ENCODE measurements at regions of chr5 and their contacts with region 1.

Region 1: GRCh38 chr5:179806250-179807222 is at the start of gene MGAT4B:
- DNase-seq: peak; percentile 69
- ATAC-seq: peak; percentile 79
- H3K4me3 Mint-ChIP-seq: peak within 1 kb of the TSS; percentile 79
- H3K27ac Mint-ChIP-seq: peak within 1 kb of the TSS; percentile 70
- H3K4me1 Mint-ChIP-seq: peaks cover 37% of the 10 kb centered on the region
- H3K27me3 Mint-ChIP-seq: no peaks in the 10 kb centered on the region
- CTCF ChIP-seq: no peak
- total RNA-seq, gene MGAT4B: 73.6 and 85.3 TPM in 2 replicates

Region 2: DNA sequence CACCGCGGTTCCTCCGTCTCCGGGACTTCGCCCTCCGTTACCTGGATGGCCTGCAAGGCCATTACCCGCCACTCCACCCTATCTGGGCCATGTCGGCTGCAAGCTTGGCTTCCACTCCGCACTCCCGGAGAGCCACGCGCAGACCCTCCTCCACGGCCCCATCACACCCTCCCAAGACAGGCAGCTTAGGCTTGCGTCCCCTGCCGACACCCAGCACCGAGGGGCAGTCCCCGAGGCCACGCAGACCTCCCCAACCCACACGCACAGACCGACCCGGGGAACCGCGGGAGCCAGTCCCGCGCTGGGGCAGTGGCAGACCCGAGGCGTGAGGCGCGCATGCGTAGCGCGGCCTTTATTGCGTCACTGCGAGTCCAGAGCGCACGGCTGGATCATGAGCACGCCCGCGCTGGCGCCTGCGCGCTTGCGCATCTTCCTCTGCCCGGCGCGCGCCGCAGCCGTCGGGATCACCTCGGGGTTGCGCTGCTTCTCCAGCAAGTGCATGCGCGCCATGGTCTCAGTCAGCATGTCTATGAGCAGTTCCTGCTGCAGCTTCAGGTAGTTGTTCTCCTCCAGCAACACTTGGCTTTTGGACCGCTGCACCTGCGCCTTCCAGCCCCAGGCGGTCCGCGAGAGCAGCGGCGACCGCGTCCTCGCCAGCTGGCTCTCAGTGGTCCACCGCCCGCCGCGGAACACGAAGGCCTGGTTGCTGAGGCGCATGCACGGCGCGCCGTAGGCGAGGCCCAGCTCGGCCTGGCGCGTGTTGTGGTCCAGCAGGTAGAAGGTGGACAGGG is 128.1 kb before region 1 on chr5:
- CTCF ChIA-PET with region 1: interaction called, 3 read pairs
- POLR2A ChIA-PET with region 1: interaction called, 10 read pairs
- intact Hi-C with region 1: no loop called
- DNase-seq: peak; percentile 91
- ATAC-seq: peak; percentile 91
- H3K4me3 Mint-ChIP-seq: peak overlapping the region; percentile 96
- H3K27ac Mint-ChIP-seq: peak overlapping the region; percentile 94
- H3K4me1 Mint-ChIP-seq: peaks cover 32% of the 10 kb centered on the region
- H3K27me3 Mint-ChIP-seq: no peaks in the 10 kb centered on the region
- CTCF ChIP-seq: no peak

Region 3: DNA sequence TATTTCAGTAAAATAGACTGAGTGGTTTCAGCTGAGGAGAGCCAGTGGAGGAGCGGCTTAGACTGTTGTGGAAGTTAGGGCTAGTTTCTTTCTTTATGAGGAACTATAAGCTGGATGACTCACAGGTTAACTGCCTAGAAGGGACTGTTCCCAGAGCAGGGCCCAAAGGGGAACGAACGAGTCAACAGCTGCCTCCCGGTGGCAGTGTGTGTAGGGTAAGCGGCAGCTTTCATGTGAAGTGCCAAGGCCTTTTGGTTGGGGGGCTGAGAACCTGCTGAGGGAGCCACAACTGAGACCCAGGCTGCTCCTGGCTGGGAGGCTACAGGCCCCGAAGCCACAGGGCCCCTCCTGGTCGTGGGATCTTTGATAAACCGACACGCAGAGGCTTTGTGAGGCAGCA is 21.1 kb after region 1 on chr5:
- CTCF ChIA-PET with region 1: interaction called, 12 read pairs
- POLR2A ChIA-PET with region 1: interaction called, 7 read pairs
- intact Hi-C with region 1: no loop called
- DNase-seq: no peak
- ATAC-seq: peak; percentile 82
- H3K4me3 Mint-ChIP-seq: no peak overlapping the region
- H3K27ac Mint-ChIP-seq: peak overlapping the region; percentile 56
- H3K4me1 Mint-ChIP-seq: peaks cover 35% of the 10 kb centered on the region
- H3K27me3 Mint-ChIP-seq: no peaks in the 10 kb centered on the region
- CTCF ChIP-seq: no peak

Region 4: DNA sequence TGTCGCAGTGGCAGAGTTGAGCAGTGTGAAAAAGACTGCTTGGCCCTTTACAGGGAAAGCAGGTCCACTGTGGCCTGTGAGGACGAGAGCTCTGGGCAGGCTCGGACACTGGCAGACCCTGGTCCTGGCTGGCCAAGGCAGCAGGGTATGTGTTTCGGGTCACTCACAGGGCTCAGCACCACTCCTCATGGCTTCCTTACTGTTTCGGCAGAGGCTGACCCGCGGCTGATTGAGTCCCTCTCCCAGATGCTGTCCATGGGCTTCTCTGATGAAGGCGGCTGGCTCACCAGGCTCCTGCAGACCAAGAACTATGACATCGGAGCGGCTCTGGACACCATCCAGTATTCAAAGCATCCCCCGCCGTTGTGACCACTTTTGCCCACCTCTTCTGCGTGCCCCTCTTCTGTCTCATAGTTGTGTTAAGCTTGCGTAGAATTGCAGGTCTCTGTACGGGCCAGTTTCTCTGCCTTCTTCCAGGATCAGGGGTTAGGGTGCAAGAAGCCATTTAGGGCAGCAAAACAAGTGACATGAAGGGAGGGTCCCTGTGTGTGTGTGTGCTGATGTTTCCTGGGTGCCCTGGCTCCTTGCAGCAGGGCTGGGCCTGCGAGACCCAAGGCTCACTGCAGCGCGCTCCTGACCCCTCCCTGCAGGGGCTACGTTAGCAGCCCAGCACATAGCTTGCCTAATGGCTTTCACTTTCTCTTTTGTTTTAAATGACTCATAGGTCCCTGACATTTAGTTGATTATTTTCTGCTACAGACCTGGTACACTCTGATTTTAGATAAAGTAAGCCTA is 29.9 kb after region 1 on chr5:
- CTCF ChIA-PET with region 1: interaction called, 3 read pairs
- POLR2A ChIA-PET with region 1: interaction called, 9 read pairs
- intact Hi-C with region 1: loop called (anchors 2 kb)
- DNase-seq: no peak
- ATAC-seq: peak; percentile 92
- H3K4me3 Mint-ChIP-seq: no peak overlapping the region
- H3K27ac Mint-ChIP-seq: peak overlapping the region; percentile 63
- H3K4me1 Mint-ChIP-seq: peaks cover 15% of the 10 kb centered on the region
- H3K27me3 Mint-ChIP-seq: no peaks in the 10 kb centered on the region
- CTCF ChIP-seq: no peak

Region 5: DNA sequence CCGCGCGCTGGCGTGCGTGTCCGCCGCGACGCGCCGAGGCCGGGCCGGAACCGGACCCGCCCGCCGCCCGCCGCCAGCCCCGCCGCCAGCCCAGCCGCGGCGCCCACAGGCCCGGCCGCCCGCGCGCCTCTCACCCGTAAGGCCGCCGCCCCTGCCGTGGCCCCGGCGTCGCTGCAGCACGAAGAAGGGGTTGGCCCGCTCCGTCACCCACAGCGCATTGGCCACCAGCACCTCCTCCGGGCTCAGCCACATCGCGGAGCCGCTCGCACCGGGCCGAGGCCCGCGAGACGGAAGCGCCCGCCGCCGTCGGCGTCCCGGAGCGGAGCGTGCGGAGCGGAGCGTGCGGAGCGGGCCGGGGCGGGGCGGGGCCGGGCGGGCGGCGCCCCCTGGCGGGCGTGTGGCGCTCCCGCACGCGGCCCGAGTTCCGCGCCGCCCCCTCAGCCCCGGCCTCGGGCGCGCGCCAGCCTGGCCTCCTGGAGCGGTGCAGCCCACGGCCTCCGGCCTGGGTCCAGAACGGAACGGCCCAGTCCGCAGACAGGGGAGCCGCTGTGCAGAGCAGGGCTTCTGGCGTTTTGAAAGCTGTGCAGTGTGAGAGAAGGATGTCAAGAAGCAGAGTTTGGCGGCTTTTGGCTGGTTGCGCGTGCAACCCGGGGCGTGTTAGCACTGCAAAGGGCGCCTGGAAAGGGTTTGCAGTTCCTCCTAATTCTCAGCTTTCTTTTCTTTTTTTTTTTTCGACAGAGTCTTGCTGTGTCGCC is 101.2 kb after region 1 on chr5 and contains the start of gene TBC1D9B:
- CTCF ChIA-PET with region 1: interaction called, 4 read pairs
- POLR2A ChIA-PET with region 1: interaction called, 3 read pairs
- intact Hi-C with region 1: loop called (anchors 1 kb)
- DNase-seq: peak; percentile 74
- ATAC-seq: peak; percentile 90
- H3K4me3 Mint-ChIP-seq: peak within 1 kb of the TSS; percentile 87
- H3K27ac Mint-ChIP-seq: peak within 1 kb of the TSS; percentile 83
- H3K4me1 Mint-ChIP-seq: peaks cover 29% of the 10 kb centered on the region
- H3K27me3 Mint-ChIP-seq: no peaks in the 10 kb centered on the region
- CTCF ChIP-seq: no peak
- total RNA-seq, gene TBC1D9B: 111 and 117 TPM in 2 replicates

Region 6: GRCh38 chr5:180090098-180090768 is 283.7 kb after region 1 on chr5:
- CTCF ChIA-PET with region 1: interaction called, 4 read pairs
- POLR2A ChIA-PET with region 1: no interaction called
- intact Hi-C with region 1: loop called (anchors 2 kb)
- DNase-seq: peak; percentile 85
- ATAC-seq: peak; percentile 91
- H3K4me3 Mint-ChIP-seq: peak overlapping the region; percentile 86
- H3K27ac Mint-ChIP-seq: peak overlapping the region; percentile 56
- H3K4me1 Mint-ChIP-seq: peaks cover 15% of the 10 kb centered on the region
- H3K27me3 Mint-ChIP-seq: peaks cover 8% of the 10 kb centered on the region
- CTCF ChIP-seq: no peak

Measured in activated B cell treated with CpG ODN at 0.5 μM for 24 hours (primary cell).